ENCODE measurements at regions of chr2 and their contacts with region 1.

Region 1: GRCh38 chr2:1550658-1551316 is 137.5 kb downstream of the TPO start:
- DNase-seq: no peak
- H3K4me3 ChIP-seq: no peak overlapping the region
- H3K27me3 ChIP-seq: no peaks in the 10 kb centered on the region; the same call in 1 of the 2 replicates
- CTCF ChIP-seq: peak; percentile 98

Region 2: DNA sequence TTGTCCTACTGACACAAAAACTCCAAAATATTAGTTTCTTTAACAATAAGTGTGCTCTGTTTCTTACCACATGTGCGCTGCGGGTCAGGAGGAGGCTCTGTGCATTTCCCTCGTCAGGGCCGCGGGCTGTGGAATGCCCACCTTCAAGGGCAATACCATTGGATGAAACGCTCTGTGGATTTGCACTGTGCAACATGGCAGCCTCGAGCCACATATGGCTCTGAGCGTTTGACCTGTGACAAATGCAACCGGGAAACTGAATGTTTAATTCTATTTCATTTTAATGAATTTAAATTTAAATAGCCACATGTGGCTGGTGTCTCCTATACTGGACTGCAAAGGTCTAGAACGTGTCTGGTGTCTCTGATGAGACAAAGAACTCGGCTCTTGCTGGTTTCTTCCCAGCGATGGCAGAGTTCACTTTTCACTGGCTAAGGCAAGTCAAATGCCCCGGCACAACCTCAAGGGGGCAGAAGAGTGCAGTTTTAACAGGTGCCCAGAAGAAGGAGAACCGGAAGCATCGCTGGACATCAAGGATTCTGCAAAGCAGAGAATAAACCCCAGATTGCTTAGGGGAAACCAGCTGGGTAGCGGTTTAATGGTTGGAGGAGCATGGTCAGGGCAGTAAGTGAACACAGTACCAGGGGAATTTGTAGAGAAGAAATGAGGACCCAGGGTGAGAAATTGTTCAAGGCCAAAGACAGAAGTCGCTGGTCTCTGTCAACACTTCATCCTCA is 836.6 kb before region 1 on chr2:
- CTCF ChIA-PET with region 1: interaction called, 34 read pairs
- POLR2A ChIA-PET with region 1: no interaction called
- DNase-seq: no peak
- H3K4me3 ChIP-seq: no peak overlapping the region
- H3K27me3 ChIP-seq: peaks cover 2% of the 10 kb centered on the region; the same call in 1 of the 2 replicates
- CTCF ChIP-seq: peak; percentile 83

Region 3: GRCh38 chr2:1563943-1564891 is 13.4 kb after region 1 on chr2:
- CTCF ChIA-PET with region 1: interaction called, 25 read pairs
- POLR2A ChIA-PET with region 1: no interaction called
- DNase-seq: no peak
- H3K4me3 ChIP-seq: no peak overlapping the region
- H3K27me3 ChIP-seq: peaks cover 4% of the 10 kb centered on the region
- CTCF ChIP-seq: no peak

Region 4: GRCh38 chr2:1673160-1673944 is 122.6 kb after region 1 on chr2:
- CTCF ChIA-PET with region 1: no interaction called
- POLR2A ChIA-PET with region 1: no interaction called
- DNase-seq: no peak
- H3K4me3 ChIP-seq: no peak overlapping the region
- H3K27me3 ChIP-seq: no peaks in the 10 kb centered on the region
- CTCF ChIP-seq: no peak

Region 5: GRCh38 chr2:1750933-1751766 is 200.4 kb after region 1 on chr2:
- CTCF ChIA-PET with region 1: interaction called, 69 read pairs
- POLR2A ChIA-PET with region 1: interaction called, 3 read pairs
- DNase-seq: no peak
- H3K4me3 ChIP-seq: no peak overlapping the region
- H3K27me3 ChIP-seq: no peaks in the 10 kb centered on the region
- CTCF ChIP-seq: peak; percentile 98

Region 6: GRCh38 chr2:1817256-1818051 is 266.7 kb after region 1 on chr2:
- CTCF ChIA-PET with region 1: interaction called, 80 read pairs
- POLR2A ChIA-PET with region 1: no interaction called
- DNase-seq: peak; percentile 97
- H3K4me3 ChIP-seq: no peak overlapping the region
- H3K27me3 ChIP-seq: no peaks in the 10 kb centered on the region
- CTCF ChIP-seq: peak; percentile 99

Measured in BJ (cell line).